ENCODE measurements at regions of chr3 and their contacts with region 1.

Region 1: DNA sequence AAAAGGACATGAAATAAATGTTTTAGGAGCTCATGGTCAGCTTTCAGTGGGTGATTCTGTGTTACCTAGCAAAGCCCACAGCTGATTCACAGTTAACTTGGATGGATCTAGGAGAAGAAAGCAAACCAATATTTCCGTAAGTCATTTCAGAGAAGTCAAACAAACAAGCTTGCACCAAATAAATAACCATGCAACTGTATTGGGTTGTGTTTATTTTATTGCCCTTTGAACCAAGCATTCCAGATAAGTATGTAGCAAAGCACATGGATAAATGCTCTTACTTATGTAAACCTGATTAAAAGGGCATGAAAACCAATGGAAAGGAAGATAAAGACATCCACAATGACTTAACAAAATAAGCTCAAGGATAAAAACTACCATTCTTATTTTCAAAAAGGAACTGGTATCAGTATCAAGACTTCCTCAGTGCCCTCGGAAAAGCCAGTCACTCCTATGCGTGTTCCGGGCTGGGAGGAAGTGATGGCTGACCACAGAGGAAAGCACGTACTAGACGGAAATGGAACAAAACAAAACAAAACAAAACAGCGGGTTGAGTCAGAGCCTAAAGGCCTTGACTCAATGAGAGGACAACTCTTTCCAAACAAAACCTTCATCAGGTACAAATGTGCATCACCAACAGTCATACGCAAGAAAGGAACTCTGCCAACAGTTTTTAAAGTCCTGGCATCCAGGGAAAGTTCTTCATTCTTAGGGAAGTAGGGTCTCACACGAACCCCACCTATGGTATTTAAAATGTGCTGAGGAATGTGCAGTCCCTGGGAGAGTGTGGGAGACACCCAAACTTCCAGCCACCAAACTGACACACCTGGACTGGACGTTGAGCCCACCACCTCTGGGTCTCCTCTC is 103.3 kb downstream of the SNRK start:
- DNase-seq: peak in 8 of 9 donors; percentile 58 to 91 (median 85)
- ATAC-seq: peak; percentile 98
- H3K4me3 ChIP-seq: peak overlapping the region; percentile 18
- H3K4me3 Mint-ChIP-seq: peak overlapping the region in 9 of 10 donors; percentile 48 to 81 (median 60)
- H3K27ac ChIP-seq: peak overlapping the region; percentile 50
- H3K27ac Mint-ChIP-seq: peak overlapping the region; percentile 85 to 97 (median 94)
- H3K4me1 ChIP-seq: peaks cover 30 to 39% of the 10 kb centered on the region in 2 donors
- H3K4me1 Mint-ChIP-seq: peaks cover 40 to 83% (median 70%) of the 10 kb centered on the region in 7 donors
- H3K27me3 ChIP-seq: no peaks in the 10 kb centered on the region
- H3K27me3 Mint-ChIP-seq: peaks cover 0 to 12% (median 0%) of the 10 kb centered on the region in 5 donors

Region 2: GRCh38 chr3:43055806-43056770 is 333.5 kb before region 1 on chr3:
- CTCF ChIA-PET with region 1: no interaction called
- POLR2A ChIA-PET with region 1: no interaction called
- intact Hi-C with region 1: no loop called
- DNase-seq: peak in 1 of 9 donors; percentile 13
- ATAC-seq: no peak
- H3K4me3 ChIP-seq: no peak overlapping the region
- H3K4me3 Mint-ChIP-seq: no peak overlapping the region
- H3K27ac ChIP-seq: no peak overlapping the region
- H3K27ac Mint-ChIP-seq: no peak overlapping the region
- H3K4me1 ChIP-seq: peaks cover 0 to 14% of the 10 kb centered on the region in 2 donors
- H3K4me1 Mint-ChIP-seq: peaks cover 0 to 20% (median 16%) of the 10 kb centered on the region in 7 donors
- H3K27me3 ChIP-seq: no peaks in the 10 kb centered on the region
- H3K27me3 Mint-ChIP-seq: peaks cover 0 to 6% (median 0%) of the 10 kb centered on the region in 5 donors

Region 3: GRCh38 chr3:43180027-43180426 is 209.6 kb before region 1 on chr3:
- CTCF ChIA-PET with region 1: interaction called, 3 read pairs
- POLR2A ChIA-PET with region 1: no interaction called
- intact Hi-C with region 1: loop called in 1 of 2 experiments (anchors 1 kb)
- DNase-seq: peak in 7 of 9 donors; percentile 38 to 66 (median 61)
- ATAC-seq: peak; percentile 86
- H3K4me3 ChIP-seq: peak overlapping the region; percentile 37
- H3K4me3 Mint-ChIP-seq: peak overlapping the region; percentile 66 to 82 (median 79)
- H3K27ac ChIP-seq: peak overlapping the region; percentile 50
- H3K27ac Mint-ChIP-seq: peak overlapping the region; percentile 82 to 97 (median 93)
- H3K4me1 ChIP-seq: peaks cover 32 to 41% of the 10 kb centered on the region in 2 donors
- H3K4me1 Mint-ChIP-seq: peaks cover 47 to 76% (median 71%) of the 10 kb centered on the region in 7 donors
- H3K27me3 ChIP-seq: no peaks in the 10 kb centered on the region
- H3K27me3 Mint-ChIP-seq: no peaks in the 10 kb centered on the region

Region 4: DNA sequence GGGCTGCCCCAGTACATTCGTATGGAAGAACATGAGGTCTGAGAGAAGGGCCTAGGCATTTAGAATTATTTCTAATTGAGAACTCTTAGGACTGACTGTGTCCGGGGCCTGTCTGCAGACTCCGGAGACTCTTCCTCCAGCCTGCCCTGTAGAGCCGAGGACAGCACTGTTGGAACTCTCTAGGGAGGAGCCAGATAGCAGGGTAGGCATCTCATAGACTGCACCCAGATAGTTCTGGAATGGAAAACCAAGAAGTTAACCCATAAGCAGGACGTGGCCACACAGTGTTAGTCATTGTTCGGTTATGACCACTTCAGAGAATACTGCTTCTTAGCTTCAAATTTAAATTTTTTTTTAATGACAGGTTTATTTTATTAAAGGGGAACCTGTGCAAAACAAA is 43.7 kb before region 1 on chr3:
- CTCF ChIA-PET with region 1: no interaction called
- POLR2A ChIA-PET with region 1: interaction called, 9 read pairs
- intact Hi-C with region 1: loop called in 1 of 2 experiments (anchors 1 kb)
- DNase-seq: no peak
- ATAC-seq: no peak
- H3K4me3 ChIP-seq: no peak overlapping the region
- H3K4me3 Mint-ChIP-seq: peak overlapping the region in 9 of 10 donors; percentile 18 to 73 (median 64)
- H3K27ac ChIP-seq: peak overlapping the region; percentile 48
- H3K27ac Mint-ChIP-seq: peak overlapping the region; percentile 88 to 96 (median 92)
- H3K4me1 ChIP-seq: peaks cover 68 to 83% of the 10 kb centered on the region in 2 donors
- H3K4me1 Mint-ChIP-seq: peaks cover 41 to 85% (median 74%) of the 10 kb centered on the region in 7 donors
- H3K27me3 ChIP-seq: no peaks in the 10 kb centered on the region
- H3K27me3 Mint-ChIP-seq: no peaks in the 10 kb centered on the region

Region 5: DNA sequence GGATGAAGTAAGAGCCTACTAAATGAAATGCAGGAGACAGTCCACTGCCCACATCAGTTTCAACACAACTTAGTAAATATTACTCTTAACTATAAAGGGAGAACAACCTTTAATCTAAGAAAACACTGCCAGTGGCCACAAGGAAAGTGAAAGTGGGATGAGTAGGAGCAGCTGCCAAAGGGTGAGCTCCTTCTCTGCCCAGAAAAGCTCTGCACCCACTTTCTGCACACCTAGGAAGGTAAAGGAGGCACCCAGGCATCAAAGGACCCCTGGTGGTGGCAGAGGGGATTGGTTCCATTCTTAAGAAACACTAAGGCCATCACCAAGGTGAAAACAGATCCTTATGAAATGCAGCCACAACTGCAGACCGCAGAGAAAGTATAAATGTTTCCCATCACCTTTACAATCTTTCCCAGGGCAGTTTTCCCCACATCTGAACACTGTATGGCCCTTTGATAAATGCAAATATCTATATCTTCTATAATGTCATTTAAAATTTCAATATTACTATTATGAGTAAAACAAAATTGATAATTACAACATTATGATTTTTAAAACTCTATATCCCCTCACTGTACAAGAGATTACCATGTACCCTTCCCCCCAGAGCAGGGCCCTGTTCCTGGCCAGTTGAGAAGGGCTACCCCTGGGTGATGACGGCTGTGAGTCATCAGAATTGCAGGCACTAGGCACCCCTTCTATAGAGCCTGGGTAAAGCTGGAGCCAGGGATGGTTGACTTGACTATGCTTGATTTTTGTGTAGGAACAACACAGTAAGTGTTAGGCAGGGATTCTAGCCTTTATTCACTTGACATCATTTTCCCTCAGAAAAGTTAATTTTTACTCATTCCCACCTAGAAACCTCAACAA is 11.3 kb before region 1 on chr3:
- CTCF ChIA-PET with region 1: interaction called, 6 read pairs
- POLR2A ChIA-PET with region 1: interaction called, 15 read pairs
- intact Hi-C with region 1: loop called (anchors 1 kb)
- DNase-seq: peak; percentile 30 to 78 (median 71)
- ATAC-seq: peak; percentile 94
- H3K4me3 ChIP-seq: no peak overlapping the region
- H3K4me3 Mint-ChIP-seq: no peak overlapping the region
- H3K27ac ChIP-seq: no peak overlapping the region
- H3K27ac Mint-ChIP-seq: peak overlapping the region in 8 of 9 donors; percentile 26 to 88 (median 40)
- H3K4me1 ChIP-seq: peaks cover 6 to 10% of the 10 kb centered on the region in 2 donors
- H3K4me1 Mint-ChIP-seq: peaks cover 6 to 29% (median 19%) of the 10 kb centered on the region in 7 donors
- H3K27me3 ChIP-seq: no peaks in the 10 kb centered on the region
- H3K27me3 Mint-ChIP-seq: peaks cover 0 to 12% (median 0%) of the 10 kb centered on the region in 5 donors

Region 6: GRCh38 chr3:43477600-43477999 is 88.0 kb after region 1 on chr3:
- CTCF ChIA-PET with region 1: interaction called, 3 read pairs
- POLR2A ChIA-PET with region 1: interaction called, 4 read pairs
- intact Hi-C with region 1: loop called in 1 of 2 experiments (anchors 1 kb)
- DNase-seq: peak in 8 of 9 donors; percentile 21 to 81 (median 72)
- ATAC-seq: peak; percentile 98
- H3K4me3 ChIP-seq: peak overlapping the region; percentile 7
- H3K4me3 Mint-ChIP-seq: peak overlapping the region; percentile 48 to 78 (median 65)
- H3K27ac ChIP-seq: peak overlapping the region; percentile 71
- H3K27ac Mint-ChIP-seq: peak overlapping the region; percentile 91 to 99 (median 98)
- H3K4me1 ChIP-seq: peaks cover 33 to 40% of the 10 kb centered on the region in 2 donors
- H3K4me1 Mint-ChIP-seq: peaks cover 24 to 66% (median 60%) of the 10 kb centered on the region in 7 donors
- H3K27me3 ChIP-seq: no peaks in the 10 kb centered on the region
- H3K27me3 Mint-ChIP-seq: peaks cover 0 to 2% (median 0%) of the 10 kb centered on the region in 5 donors

Region 7: DNA sequence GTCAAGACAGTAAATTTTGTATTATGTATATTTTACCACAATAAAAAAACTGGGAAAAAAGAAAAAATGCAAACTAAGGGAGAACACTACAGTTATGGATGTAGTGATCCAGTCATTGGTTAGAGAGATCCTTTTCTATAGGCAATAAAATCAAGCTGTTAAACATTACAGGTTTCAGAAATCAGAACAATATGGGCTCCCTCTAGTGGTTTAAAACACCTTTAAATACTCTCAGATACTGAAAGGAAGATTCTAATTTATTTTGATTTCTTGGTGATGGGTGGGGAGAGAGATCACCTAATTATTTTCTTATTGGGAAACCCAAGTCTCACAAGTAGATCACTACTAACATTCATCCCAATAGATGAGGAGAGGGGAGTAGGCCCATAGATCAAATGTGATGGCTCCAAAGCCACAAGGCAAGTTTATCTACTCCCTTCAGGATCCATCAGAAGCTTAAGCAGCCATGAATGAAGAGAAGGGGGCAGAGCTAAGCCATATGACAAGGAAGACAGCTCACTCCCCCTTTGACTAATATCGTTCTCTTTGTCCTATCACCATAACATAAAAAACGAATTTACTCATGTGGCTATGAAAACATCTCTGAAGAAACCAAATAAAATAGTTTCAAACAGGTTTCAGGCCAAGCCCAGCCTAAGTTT is 113.6 kb after region 1 on chr3:
- CTCF ChIA-PET with region 1: interaction called, 13 read pairs
- POLR2A ChIA-PET with region 1: interaction called, 6 read pairs
- intact Hi-C with region 1: loop called (anchors 2 to 5 kb)
- DNase-seq: peak in 6 of 9 donors; percentile 39 to 68 (median 59)
- ATAC-seq: peak; percentile 68
- H3K4me3 ChIP-seq: no peak overlapping the region
- H3K4me3 Mint-ChIP-seq: no peak overlapping the region
- H3K27ac ChIP-seq: no peak overlapping the region
- H3K27ac Mint-ChIP-seq: peak overlapping the region in 4 of 9 donors; percentile 2 to 49 (median 24)
- H3K4me1 ChIP-seq: peaks cover 17 to 18% of the 10 kb centered on the region in 2 donors
- H3K4me1 Mint-ChIP-seq: peaks cover 18 to 51% (median 48%) of the 10 kb centered on the region in 7 donors
- H3K27me3 ChIP-seq: no peaks in the 10 kb centered on the region
- H3K27me3 Mint-ChIP-seq: peaks cover 0 to 8% (median 0%) of the 10 kb centered on the region in 5 donors